ENCODE measurements at regions of chr19 and their contacts with region 1.

Region 1: GRCh38 chr19:44113138-44113783 is at the start of gene ZNF225:
- DNase-seq: peak; percentile 99
- H3K4me3 ChIP-seq: peak within 1 kb of the TSS; percentile 72 to 90
- H3K27ac ChIP-seq: peak within 1 kb of the TSS; percentile 36 to 59
- H3K4me1 ChIP-seq: peaks cover 11% of the 10 kb centered on the region
- H3K27me3 ChIP-seq: no peaks in the 10 kb centered on the region
- CTCF ChIP-seq: no peak
- POLR2A ChIP-seq: no peak
- total RNA-seq, gene ZNF225: 5.0 to 7.4 TPM

Region 2: GRCh38 chr19:43939557-43940260 is 173.6 kb before region 1 on chr19:
- intact Hi-C with region 1: no loop called
- DNase-seq: no peak
- H3K4me3 ChIP-seq: no peak overlapping the region
- H3K27ac ChIP-seq: no peak overlapping the region
- H3K4me1 ChIP-seq: no peaks in the 10 kb centered on the region
- H3K27me3 ChIP-seq: no peaks in the 10 kb centered on the region
- CTCF ChIP-seq: no peak
- POLR2A ChIP-seq: no peak

Region 3: DNA sequence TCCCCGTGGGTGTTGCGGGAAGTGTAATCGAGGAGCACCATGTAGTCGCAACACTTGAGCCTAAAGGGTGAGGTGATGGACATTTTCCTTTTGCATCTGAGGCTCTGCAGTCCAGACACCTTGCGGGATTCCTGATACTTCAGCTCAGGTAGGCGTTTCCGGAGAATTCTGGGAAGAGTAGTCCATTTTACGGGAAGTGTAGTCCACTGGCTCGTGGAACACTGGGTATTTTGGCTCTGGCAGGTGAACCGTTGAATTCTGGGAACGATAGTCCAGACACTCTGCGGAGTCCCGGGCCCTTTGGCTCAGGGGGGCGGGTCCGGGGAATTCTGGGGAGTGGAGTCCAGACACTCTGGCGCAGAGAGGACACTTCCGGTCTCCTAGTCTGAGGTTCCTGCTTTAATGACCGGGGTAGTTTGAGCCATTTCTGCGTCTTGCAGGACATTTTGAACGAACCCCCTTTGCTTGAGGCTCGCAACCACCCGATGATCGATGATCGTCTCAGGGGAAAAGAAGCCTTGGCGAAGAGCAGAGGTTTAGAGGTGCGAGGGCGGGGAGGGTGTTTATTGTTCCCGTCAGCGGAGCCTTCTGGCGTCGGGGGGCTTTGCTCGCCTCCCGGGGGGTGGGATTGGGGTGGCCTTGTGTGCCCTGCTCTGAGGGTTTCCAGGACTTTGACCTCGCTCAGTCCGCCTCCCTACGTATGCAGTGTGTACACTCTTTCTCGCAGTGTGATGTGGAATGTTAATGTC is 61.4 kb before region 1 on chr19 and contains the start of gene ZNF223:
- intact Hi-C with region 1: loop called (anchors 10 kb)
- DNase-seq: peak; percentile 98
- H3K4me3 ChIP-seq: peak within 1 kb of the TSS; percentile 71 to 75
- H3K27ac ChIP-seq: peak within 1 kb of the TSS in 1 of 2 donors; percentile 65
- H3K4me1 ChIP-seq: peaks cover 6% of the 10 kb centered on the region
- H3K27me3 ChIP-seq: no peaks in the 10 kb centered on the region
- CTCF ChIP-seq: peak in 2 of 3 experiments; percentile 3 to 17
- POLR2A ChIP-seq: no peak
- total RNA-seq, gene ZNF223: 4.5 to 4.8 TPM

Region 4: DNA sequence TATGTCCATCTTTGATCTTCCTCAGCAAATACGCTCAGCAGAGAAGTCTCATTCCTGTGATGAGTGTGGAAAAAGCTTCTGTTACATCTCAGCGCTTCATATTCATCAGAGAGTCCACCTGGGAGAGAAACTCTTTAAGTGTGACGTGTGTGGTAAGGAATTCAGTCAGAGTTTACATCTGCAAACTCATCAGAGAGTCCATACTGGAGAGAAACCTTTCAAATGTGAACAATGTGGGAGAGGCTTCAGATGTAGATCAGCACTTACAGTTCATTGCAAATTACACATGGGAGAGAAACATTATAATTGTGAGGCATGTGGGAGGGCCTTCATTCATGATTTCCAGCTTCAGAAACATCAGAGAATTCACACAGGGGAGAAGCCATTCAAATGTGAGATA is 47.0 kb before region 1 on chr19:
- intact Hi-C with region 1: no loop called
- DNase-seq: no peak
- H3K4me3 ChIP-seq: no peak overlapping the region
- H3K27ac ChIP-seq: no peak overlapping the region
- H3K4me1 ChIP-seq: no peaks in the 10 kb centered on the region
- H3K27me3 ChIP-seq: no peaks in the 10 kb centered on the region
- CTCF ChIP-seq: no peak
- POLR2A ChIP-seq: no peak

Measured in testis (tissue), 5 donors.